GM13976 (cell line): ENCODE measurements at regions of chr1 and their contacts with region 1.

Region 1: GRCh38 chr1:174799136-174799479 is 200.6 kb upstream of the CACYBP start:
- DNase-seq: no peak
- CTCF ChIP-seq: no peak

Region 2: GRCh38 chr1:174964261-174964971 is 165.3 kb after region 1 on chr1:
- in situ Hi-C with region 1: no loop called
- DNase-seq: no peak
- CTCF ChIP-seq: no peak

Region 3: DNA sequence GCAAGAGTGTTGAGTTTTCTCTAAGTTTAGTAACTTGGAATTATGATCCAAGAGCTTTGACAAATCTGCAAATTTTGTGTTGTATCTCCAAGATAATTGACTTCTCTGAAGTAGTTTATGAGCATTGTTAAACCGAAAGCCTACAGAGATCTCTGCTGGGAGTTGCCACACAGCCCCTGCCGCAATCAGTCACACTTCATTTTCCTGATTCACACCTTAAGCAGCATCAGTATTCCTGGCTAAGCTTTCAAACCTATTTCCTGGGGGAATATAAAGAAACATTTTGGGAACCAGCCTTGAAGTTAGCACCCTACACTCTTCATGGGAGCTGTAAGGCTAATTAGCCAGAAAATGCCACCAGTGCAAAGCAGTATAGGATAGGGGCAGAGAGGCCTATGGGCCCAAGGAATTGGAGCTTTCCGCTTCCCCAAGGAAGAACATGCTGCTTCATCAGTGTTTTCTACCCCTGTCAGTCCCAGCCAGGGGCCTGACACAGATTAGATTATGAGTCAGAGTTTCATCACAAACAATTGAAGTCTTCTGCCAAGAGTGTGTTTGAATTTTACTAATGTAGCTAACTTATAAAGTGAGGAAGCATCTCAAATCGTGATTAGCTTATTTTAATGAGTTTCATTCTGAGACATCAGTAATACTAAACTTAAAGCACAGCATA is 177.5 kb after region 1 on chr1:
- in situ Hi-C with region 1: loop called (anchors 10 kb)
- DNase-seq: no peak
- CTCF ChIP-seq: no peak